Caco-2 (cell line): ENCODE measurements at regions of chr7 and their contacts with region 1.

Region 1: DNA sequence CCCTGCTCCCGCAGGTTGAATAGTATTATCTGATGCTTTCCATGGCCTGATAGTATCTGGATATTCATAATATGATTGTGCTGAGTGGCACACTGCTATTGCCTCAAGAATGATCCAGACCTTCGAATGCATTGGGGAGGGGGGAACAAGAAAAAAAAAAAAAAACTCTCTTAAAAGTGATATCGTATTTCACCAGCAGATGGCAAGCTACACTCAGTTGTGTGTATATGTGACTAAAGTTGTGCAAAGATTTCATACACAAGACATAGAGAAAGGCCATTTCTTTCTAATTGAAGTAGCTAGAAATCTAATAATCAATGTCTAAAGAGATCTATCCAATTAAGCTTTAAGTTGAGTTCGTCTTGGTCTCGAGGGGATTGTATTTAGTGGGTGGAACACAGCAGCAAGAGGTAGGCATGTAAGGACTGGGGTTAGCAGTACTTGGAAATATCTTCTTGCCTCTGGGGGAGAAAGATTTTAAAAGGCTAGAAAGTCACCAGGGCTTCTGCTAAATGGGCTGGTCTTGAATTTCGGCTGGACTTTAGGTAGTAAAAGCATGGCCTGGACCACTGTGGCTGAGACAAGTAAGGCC is 15.3 kb downstream of the SFRP4 start:
- DNase-seq: peak in 1 of 2 experiments; percentile 27
- H3K4me3 ChIP-seq: no peak overlapping the region
- H3K4me3 Mint-ChIP-seq: no peak overlapping the region
- H3K27ac Mint-ChIP-seq: no peak overlapping the region
- H3K4me1 ChIP-seq: peaks cover 16% of the 10 kb centered on the region
- H3K4me1 Mint-ChIP-seq: peaks cover 6% of the 10 kb centered on the region
- H3K27me3 ChIP-seq: no peaks in the 10 kb centered on the region
- H3K27me3 Mint-ChIP-seq: no peaks in the 10 kb centered on the region
- CTCF ChIP-seq: peak; percentile 59 to 65

Region 2: GRCh38 chr7:37656913-37657530 is 244.3 kb before region 1 on chr7:
- CTCF ChIA-PET with region 1: no interaction called
- POLR2A ChIA-PET with region 1: no interaction called
- intact Hi-C with region 1: no loop called
- DNase-seq: no peak
- H3K4me3 ChIP-seq: no peak overlapping the region
- H3K4me3 Mint-ChIP-seq: no peak overlapping the region
- H3K27ac Mint-ChIP-seq: peak overlapping the region; percentile 8
- H3K4me1 ChIP-seq: no peaks in the 10 kb centered on the region
- H3K4me1 Mint-ChIP-seq: no peaks in the 10 kb centered on the region
- H3K27me3 ChIP-seq: no peaks in the 10 kb centered on the region
- H3K27me3 Mint-ChIP-seq: peaks cover 5% of the 10 kb centered on the region
- CTCF ChIP-seq: no peak

Region 3: DNA sequence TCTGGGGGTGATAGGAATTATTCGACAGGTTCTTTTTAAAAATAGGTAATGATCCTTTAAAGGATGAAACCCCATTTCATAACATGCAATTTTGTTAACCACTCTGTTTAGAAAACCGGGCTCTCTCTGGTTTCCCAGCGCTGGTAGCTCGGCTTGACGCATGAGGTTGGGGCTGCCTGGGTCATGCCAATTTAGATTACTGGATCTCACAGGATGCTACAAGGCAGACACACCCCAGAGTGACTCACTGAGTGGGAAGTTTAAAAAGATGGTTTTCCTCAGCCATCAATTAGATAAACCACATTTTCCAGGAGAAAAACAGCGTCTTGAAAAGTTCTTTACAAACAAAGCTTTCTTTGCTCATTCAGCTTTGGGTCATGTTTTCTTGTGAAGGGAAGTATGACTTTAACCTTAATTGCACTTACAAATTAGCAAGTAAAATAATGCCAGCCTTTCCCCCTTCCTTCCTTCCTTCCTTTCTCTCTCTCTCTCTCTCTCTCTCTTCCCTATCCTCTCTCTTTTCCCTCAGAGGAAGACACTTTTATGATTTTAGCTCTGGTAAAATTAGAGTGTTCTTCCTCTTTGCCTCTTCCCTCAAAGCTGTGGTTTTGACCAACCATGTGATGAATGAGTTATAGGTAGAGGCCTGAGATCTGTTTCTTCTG is 118.9 kb after region 1 on chr7:
- CTCF ChIA-PET with region 1: interaction called, 4 read pairs
- POLR2A ChIA-PET with region 1: no interaction called
- intact Hi-C with region 1: loop called (anchors 5 kb)
- DNase-seq: no peak
- H3K4me3 ChIP-seq: no peak overlapping the region
- H3K4me3 Mint-ChIP-seq: no peak overlapping the region
- H3K27ac Mint-ChIP-seq: no peak overlapping the region
- H3K4me1 ChIP-seq: no peaks in the 10 kb centered on the region
- H3K4me1 Mint-ChIP-seq: no peaks in the 10 kb centered on the region
- H3K27me3 ChIP-seq: no peaks in the 10 kb centered on the region
- H3K27me3 Mint-ChIP-seq: peaks cover 4% of the 10 kb centered on the region
- CTCF ChIP-seq: no peak

Region 4: GRCh38 chr7:38169847-38170246 is 268.5 kb after region 1 on chr7:
- CTCF ChIA-PET with region 1: no interaction called
- POLR2A ChIA-PET with region 1: no interaction called
- intact Hi-C with region 1: no loop called
- DNase-seq: no peak
- H3K4me3 ChIP-seq: no peak overlapping the region
- H3K4me3 Mint-ChIP-seq: no peak overlapping the region
- H3K27ac Mint-ChIP-seq: no peak overlapping the region
- H3K4me1 ChIP-seq: no peaks in the 10 kb centered on the region
- H3K4me1 Mint-ChIP-seq: no peaks in the 10 kb centered on the region
- H3K27me3 ChIP-seq: no peaks in the 10 kb centered on the region
- H3K27me3 Mint-ChIP-seq: peaks cover 10% of the 10 kb centered on the region
- CTCF ChIP-seq: no peak

Region 5: DNA sequence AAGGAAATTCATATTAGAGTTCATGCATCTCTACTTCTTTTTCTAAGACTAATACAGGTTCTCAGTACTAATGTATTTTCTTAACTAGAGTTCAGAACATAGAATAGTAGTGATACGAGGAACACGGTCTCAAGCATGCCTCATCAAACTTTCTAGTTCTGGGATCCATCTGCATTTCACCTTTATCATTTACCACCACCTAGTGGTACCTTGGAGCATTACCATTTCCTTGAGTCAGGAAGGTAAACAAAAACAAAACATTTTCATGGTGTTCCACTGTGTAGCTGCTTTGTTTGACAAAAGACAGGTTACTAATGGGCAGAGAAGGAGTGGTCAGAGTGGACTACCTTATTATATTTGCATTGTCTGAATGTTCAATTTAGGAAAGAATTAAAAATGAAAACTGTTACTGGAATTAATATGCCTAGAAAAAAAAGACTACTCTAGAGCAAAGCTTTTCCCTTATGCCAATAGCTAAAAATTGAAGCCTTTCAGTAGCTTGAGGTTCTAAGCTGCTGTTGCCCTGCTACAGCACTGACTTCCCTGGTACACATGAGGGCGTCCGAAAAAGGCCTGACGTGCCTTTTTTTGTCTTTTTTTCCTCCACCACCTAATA is 321.3 kb after region 1 on chr7:
- CTCF ChIA-PET with region 1: no interaction called
- POLR2A ChIA-PET with region 1: no interaction called
- intact Hi-C with region 1: loop called (anchors 5 kb)
- DNase-seq: peak in 1 of 2 experiments; percentile 61
- H3K4me3 ChIP-seq: no peak overlapping the region
- H3K4me3 Mint-ChIP-seq: no peak overlapping the region
- H3K27ac Mint-ChIP-seq: no peak overlapping the region
- H3K4me1 ChIP-seq: no peaks in the 10 kb centered on the region
- H3K4me1 Mint-ChIP-seq: no peaks in the 10 kb centered on the region
- H3K27me3 ChIP-seq: no peaks in the 10 kb centered on the region
- H3K27me3 Mint-ChIP-seq: no peaks in the 10 kb centered on the region
- CTCF ChIP-seq: peak; percentile 85 to 87

Region 6: DNA sequence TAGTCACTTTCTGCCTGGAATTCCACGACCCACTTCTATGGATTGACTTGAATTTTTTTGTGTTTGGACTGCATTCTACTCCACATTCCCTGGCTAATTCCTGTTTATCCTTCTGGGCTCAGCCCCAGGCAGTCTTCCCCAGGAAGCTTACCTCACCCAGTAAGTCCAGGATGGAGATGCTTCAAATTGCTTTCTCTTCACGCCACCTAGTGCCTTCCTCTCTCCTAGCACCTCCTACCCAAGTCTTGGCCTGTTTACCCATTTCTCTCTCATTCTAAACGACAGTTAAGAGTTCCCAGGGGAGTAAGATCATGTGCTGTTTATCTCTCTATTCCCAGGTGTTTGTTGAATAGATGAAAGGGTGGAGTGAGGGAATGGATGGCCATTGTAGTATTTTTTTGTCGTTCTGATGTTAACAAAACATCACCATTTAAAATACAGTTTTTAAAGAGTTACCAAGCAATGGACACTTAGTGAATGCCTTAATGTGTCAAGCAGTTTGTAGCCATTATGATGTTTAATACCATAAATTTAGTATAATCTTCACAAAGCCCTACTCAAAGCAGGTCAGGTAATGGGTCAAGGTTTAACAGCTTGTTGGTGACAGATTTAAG is 417.6 kb after region 1 on chr7:
- CTCF ChIA-PET with region 1: no interaction called
- POLR2A ChIA-PET with region 1: no interaction called
- intact Hi-C with region 1: loop called (anchors 1 kb)
- DNase-seq: peak; percentile 71
- H3K4me3 ChIP-seq: no peak overlapping the region
- H3K4me3 Mint-ChIP-seq: peak overlapping the region; percentile 21
- H3K27ac Mint-ChIP-seq: no peak overlapping the region
- H3K4me1 ChIP-seq: 0 out of 2 replicates have a peak, but pooled peaks cover 5% of the 10 kb centered on the region
- H3K4me1 Mint-ChIP-seq: peaks cover 11% of the 10 kb centered on the region
- H3K27me3 ChIP-seq: no peaks in the 10 kb centered on the region
- H3K27me3 Mint-ChIP-seq: peaks cover 8% of the 10 kb centered on the region
- CTCF ChIP-seq: peak; percentile 57 to 69